ENCODE measurements at regions of chr10 and their contacts with region 1.

Region 1: GRCh38 chr10:96229568-96230030 is 41.8 kb downstream of the BLNK start:
- DNase-seq: peak; percentile 74 to 83
- ATAC-seq: peak; percentile 57 to 81 (median 64)
- H3K4me3 ChIP-seq: no peak overlapping the region
- H3K27ac ChIP-seq: no peak overlapping the region
- H3K4me1 ChIP-seq: no peaks in the 10 kb centered on the region
- H3K27me3 ChIP-seq: no peaks in the 10 kb centered on the region
- CTCF ChIP-seq: peak; percentile 56

Region 2: DNA sequence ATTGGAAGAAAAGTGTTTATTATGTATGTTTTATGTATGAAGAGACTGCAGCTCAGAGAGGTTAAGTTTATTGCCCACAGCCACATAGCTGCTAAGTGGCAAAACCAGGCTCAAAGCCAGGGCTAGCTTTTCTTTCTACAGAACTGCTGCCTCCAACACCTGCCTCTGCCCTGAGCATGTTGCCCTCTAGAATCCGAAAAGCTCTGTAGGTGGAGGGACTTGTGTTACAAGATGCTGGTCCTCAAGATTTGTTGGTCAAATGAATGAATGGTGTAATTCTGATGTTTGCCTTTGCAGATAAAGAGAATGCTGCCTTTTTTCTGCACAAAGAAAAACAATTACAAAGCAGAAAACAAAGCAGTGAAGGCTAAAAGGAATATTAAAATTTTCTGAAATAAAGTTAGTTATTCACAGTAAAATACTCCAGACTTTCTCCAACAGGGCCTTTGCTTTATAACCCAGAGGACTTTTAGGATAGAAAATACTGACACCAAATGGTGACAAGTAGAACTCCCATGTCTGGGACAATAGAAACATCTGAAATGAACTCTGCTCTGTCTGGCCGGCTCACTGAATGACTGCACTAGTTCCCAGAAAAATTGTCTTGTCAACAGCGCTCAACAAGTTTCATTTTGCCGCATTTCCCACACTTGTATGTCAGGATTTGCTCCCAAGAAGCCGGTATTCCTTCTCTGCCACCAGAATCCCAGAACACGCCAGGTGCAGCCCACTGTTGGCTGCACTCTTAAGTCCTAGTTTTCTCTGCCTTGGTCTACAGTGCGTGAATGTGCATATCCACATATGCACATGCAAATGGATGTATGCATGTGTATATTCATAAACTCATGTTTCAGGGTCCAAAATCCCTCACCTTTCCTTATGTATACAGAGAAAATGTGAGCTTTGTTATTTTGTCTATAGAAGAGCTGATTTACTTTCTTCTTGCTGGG is 63.6 kb after region 1 on chr10:
- intact Hi-C with region 1: loop called (anchors 1 to 2 kb)
- DNase-seq: no peak
- ATAC-seq: peak; percentile 65 to 84 (median 74)
- H3K4me3 ChIP-seq: no peak overlapping the region
- H3K27ac ChIP-seq: no peak overlapping the region
- H3K4me1 ChIP-seq: peaks cover 4% of the 10 kb centered on the region
- H3K27me3 ChIP-seq: peaks cover 0 to 6% (median 0%) of the 10 kb centered on the region in 3 donors
- CTCF ChIP-seq: peak; percentile 65